ENCODE measurements at regions of chr10 and their contacts with region 1.

Region 1: GRCh38 chr10:74282151-74282850 is 131.3 kb downstream of the ADK start:
- DNase-seq: no peak
- H3K4me3 Mint-ChIP-seq: no peak overlapping the region
- H3K27ac Mint-ChIP-seq: no peak overlapping the region
- H3K4me1 Mint-ChIP-seq: peaks cover 13% of the 10 kb centered on the region
- H3K27me3 Mint-ChIP-seq: no peaks in the 10 kb centered on the region

Region 2: GRCh38 chr10:74363727-74364126 is 81.4 kb after region 1 on chr10:
- intact Hi-C with region 1: loop called (anchors 10 kb)
- DNase-seq: no peak
- H3K4me3 Mint-ChIP-seq: no peak overlapping the region
- H3K27ac Mint-ChIP-seq: no peak overlapping the region
- H3K4me1 Mint-ChIP-seq: peaks cover 24% of the 10 kb centered on the region
- H3K27me3 Mint-ChIP-seq: no peaks in the 10 kb centered on the region